Colonic mucosa (tissue), 4 donors: ENCODE measurements at regions of chr6 and their contacts with region 1.

Region 1: DNA sequence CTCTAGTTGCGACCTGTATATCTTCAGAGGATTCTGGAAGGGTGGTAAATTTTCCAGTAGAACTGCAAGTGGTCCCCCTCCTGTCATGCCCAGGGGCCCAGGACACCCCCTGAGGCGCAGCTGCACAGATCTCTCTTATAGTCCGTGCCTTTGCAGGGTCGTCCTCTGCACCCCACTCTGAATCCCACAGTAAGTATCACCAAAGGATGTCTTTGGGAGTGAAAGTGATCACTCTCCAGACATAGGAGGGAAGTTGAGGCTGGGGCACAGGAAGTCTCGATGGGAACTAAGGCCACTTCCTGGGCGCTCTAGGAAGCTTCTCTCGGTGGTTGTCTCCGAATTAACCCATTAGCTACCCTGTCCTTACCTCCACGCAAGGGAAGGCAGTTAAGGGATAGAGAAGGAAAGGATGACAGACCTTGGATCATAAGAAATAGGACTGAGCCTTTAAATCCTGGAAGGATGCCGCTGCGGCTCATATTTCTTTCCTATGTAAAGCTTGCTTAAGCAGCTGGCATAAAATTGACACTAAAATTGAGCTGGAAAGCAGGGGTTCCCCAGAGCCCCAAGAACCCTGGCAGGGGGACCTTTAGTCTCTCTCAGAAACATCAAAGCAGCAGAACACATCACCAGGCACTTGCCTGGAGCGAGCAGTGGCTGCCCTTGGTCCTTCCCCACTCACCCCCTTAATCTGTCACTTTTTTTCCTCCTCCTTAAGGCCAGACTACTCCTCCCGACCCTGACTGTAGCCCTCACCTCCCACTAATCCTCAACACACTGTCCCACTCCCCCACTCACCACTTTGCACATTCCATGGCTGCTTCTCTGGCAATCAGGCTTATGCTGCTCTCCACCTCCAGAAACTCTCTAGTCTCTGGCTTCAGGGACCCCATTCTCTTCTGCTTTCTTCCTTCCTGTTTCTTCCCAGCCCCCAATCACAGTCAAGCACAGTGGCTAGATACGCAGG is at the start of gene ZKSCAN4:
- DNase-seq: peak; percentile 87
- H3K4me3 ChIP-seq: peak within 1 kb of the TSS; percentile 87
- H3K27ac ChIP-seq: peak within 1 kb of the TSS; percentile 49
- H3K4me1 ChIP-seq: peaks cover 6% of the 10 kb centered on the region
- H3K27me3 ChIP-seq: no peaks in the 10 kb centered on the region
- CTCF ChIP-seq: no peak
- total RNA-seq, gene ZKSCAN4: 4.9 to 5.2 TPM

Region 2: GRCh38 chr6:28090917-28091586 is 161.2 kb before region 1 on chr6:
- intact Hi-C with region 1: no loop called
- DNase-seq: no peak
- H3K4me3 ChIP-seq: no peak overlapping the region
- H3K27ac ChIP-seq: no peak overlapping the region
- H3K4me1 ChIP-seq: no peaks in the 10 kb centered on the region
- H3K27me3 ChIP-seq: no peaks in the 10 kb centered on the region
- CTCF ChIP-seq: no peak

Region 3: GRCh38 chr6:28124102-28124970 is 128.0 kb before region 1 on chr6 and contains the start of gene ZSCAN16:
- intact Hi-C with region 1: no loop called
- DNase-seq: peak; percentile 94
- H3K4me3 ChIP-seq: peak within 1 kb of the TSS; percentile 68
- H3K27ac ChIP-seq: peak within 1 kb of the TSS; percentile 47
- H3K4me1 ChIP-seq: peaks cover 3% of the 10 kb centered on the region
- H3K27me3 ChIP-seq: no peaks in the 10 kb centered on the region
- CTCF ChIP-seq: no peak
- total RNA-seq, gene ZSCAN16: 8.3 to 8.7 TPM

Region 4: GRCh38 chr6:28136585-28137504 is 115.4 kb before region 1 on chr6:
- intact Hi-C with region 1: loop called (anchors 10 kb)
- DNase-seq: peak; percentile 85
- H3K4me3 ChIP-seq: peak overlapping the region; percentile 91
- H3K27ac ChIP-seq: peak overlapping the region; percentile 81
- H3K4me1 ChIP-seq: peaks cover 5% of the 10 kb centered on the region
- H3K27me3 ChIP-seq: no peaks in the 10 kb centered on the region
- CTCF ChIP-seq: no peak